Activated CD8-positive, alpha-beta T cell treated with anti-CD3 and anti-CD28 coated beads, Interleukin-2, amount 10 ng/mL, durations not matched to agents 7 days and 5 days (primary cell): ENCODE measurements at regions of chrX and their contacts with region 1.

Region 1: DNA sequence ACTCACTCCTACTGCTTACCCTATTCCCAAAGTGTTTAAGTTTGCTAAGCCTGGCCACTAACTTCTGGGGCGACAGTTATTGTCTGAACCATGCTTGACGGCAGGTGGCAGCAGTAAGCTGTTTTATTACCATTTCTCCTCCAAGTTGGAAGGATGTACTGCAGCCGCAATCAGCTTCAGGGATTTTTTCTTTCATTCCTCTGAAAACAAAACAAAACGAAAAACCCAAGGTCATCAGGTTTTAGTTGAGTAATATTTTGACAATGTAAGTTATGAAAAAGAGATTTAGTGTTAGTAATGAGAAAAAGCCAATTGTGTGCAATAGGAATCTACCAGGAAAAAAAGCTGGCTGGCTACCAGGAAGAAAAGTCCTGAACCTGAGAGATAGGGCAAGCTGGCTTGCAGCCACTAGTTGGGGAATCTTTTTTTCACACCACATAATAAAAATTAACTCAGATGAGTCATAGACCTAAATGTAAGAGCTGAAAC is 13.2 kb upstream of the RAB9B start:
- DNase-seq: peak; percentile 53
- ATAC-seq: no peak
- H3K4me3 Mint-ChIP-seq: no peak overlapping the region
- H3K27ac Mint-ChIP-seq: no peak overlapping the region
- H3K4me1 Mint-ChIP-seq: no peaks in the 10 kb centered on the region
- H3K27me3 Mint-ChIP-seq: peaks cover 3% of the 10 kb centered on the region

Region 2: GRCh38 chrX:103503163-103503852 is 341.9 kb before region 1 on chrX:
- CTCF ChIA-PET with region 1: no interaction called
- POLR2A ChIA-PET with region 1: no interaction called
- DNase-seq: no peak
- ATAC-seq: no peak
- H3K4me3 Mint-ChIP-seq: no peak overlapping the region
- H3K27ac Mint-ChIP-seq: no peak overlapping the region
- H3K4me1 Mint-ChIP-seq: peaks cover 2% of the 10 kb centered on the region
- H3K27me3 Mint-ChIP-seq: peaks cover 2% of the 10 kb centered on the region

Region 3: DNA sequence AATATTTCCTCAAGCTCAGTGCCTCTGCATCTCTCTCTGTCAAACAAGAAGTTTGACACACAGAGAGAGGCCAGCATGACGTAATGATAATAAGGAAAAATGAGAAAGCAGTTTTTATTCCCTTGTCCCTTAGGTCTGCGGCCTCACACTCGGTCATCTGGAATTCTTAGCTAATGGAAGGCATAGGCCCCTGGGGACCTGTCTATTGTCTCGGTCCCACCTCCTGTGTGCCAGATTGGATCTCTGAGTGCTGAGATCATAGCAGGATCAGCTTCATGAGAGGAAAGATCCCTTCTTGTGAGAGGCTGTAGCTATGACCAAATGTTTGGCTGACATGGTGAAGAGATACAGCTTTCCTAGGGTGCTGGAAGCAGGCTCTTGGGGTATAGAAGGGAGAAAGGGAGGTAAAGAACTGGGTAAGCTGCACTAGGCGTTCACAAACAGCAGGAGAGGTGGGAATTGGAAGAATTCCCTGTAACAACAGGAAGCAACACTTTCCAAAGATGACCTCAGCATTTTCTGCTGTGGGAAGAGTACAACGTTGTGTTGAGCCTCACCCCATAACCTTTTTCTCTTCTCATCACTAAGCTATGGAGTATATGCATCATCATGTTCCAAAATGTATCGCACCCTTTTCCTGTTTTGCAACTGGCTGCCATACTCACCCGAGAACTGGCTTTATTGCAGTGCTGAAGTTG is 114.3 kb before region 1 on chrX:
- CTCF ChIA-PET with region 1: no interaction called
- POLR2A ChIA-PET with region 1: no interaction called
- DNase-seq: no peak
- ATAC-seq: no peak
- H3K4me3 Mint-ChIP-seq: no peak overlapping the region
- H3K27ac Mint-ChIP-seq: no peak overlapping the region
- H3K4me1 Mint-ChIP-seq: peaks cover 6% of the 10 kb centered on the region
- H3K27me3 Mint-ChIP-seq: peaks cover 5% of the 10 kb centered on the region

Region 4: DNA sequence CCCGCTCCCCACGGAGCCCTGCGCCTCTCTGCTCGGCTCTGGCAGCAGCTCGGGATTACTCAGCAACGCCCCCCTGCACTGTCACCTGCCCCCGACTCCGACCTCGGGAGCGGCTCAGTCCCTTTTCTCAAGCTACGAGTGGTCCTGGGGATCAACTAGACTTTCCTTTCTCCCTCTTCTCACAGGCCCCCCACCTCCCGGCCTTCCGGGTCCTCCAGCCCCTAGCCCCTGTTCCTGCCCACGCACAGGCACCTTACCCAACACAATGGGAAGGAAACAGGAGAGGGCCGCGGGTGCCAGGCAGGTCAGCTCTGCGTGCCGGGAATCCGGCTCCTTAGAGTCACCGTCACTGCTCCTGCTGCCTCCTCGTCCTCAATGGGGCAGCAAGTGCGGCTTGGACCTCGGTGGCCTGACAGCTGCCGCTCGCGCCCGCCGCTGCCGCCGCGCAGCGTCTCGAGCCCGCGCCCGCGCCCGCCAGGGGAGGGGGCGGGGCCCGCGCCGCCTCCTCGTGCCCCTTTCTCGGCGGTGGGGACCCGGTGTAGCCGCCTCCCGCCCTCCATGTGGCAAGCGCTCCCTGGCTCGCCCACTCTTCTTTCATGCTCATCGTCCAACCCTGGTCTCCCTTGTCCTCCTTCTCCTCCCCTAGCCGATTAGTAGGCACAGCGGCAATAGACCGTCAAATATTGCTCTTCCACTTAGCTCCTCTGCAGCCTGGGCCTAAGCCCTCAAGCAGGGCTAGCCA is 13.2 kb before region 1 on chrX and contains the start of gene RAB9B:
- CTCF ChIA-PET with region 1: interaction called, 12 read pairs
- POLR2A ChIA-PET with region 1: interaction called, 3 read pairs
- DNase-seq: peak; percentile 20
- ATAC-seq: peak; percentile 96
- H3K4me3 Mint-ChIP-seq: peak within 1 kb of the TSS; percentile 75
- H3K27ac Mint-ChIP-seq: peak within 1 kb of the TSS; percentile 37
- H3K4me1 Mint-ChIP-seq: peaks cover 3% of the 10 kb centered on the region
- H3K27me3 Mint-ChIP-seq: peaks cover 8% of the 10 kb centered on the region
- total RNA-seq, gene RAB9B: 0.29 to 0.31 TPM

Region 5: GRCh38 chrX:103941201-103941975 is 96.2 kb after region 1 on chrX:
- CTCF ChIA-PET with region 1: interaction called, 11 read pairs
- POLR2A ChIA-PET with region 1: no interaction called
- DNase-seq: no peak
- ATAC-seq: no peak
- H3K4me3 Mint-ChIP-seq: no peak overlapping the region
- H3K27ac Mint-ChIP-seq: no peak overlapping the region
- H3K4me1 Mint-ChIP-seq: peaks cover 21% of the 10 kb centered on the region
- H3K27me3 Mint-ChIP-seq: no peaks in the 10 kb centered on the region

Region 6: GRCh38 chrX:104113222-104113965 is 268.2 kb after region 1 on chrX:
- CTCF ChIA-PET with region 1: interaction called, 13 read pairs
- POLR2A ChIA-PET with region 1: no interaction called
- DNase-seq: peak; percentile 75
- ATAC-seq: peak; percentile 62
- H3K4me3 Mint-ChIP-seq: peak overlapping the region; percentile 81
- H3K27ac Mint-ChIP-seq: peak overlapping the region; percentile 87
- H3K4me1 Mint-ChIP-seq: peaks cover 51% of the 10 kb centered on the region
- H3K27me3 Mint-ChIP-seq: no peaks in the 10 kb centered on the region